ENCODE measurements at regions of chr4 and their contacts with region 1.

Region 1: DNA sequence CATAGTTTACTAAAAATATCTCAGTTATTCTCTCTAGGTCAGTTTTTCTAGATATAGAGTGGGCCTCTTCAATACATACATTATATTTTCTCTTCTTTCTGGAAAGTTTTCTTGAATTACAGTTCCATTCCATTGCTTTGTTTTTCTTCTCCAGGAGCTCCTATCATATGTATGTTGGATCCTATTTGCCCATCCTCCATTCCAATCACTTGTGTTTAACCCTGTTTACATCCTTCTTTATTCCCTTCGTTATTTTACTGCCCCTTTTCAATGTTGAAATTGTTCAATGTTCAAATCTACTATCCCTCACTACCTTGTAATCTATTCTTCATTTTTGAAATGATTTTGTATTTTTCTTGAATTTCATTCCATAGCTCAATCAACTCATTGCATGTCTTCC is 97.4 kb downstream of the IRF2 start:
- DNase-seq: no peak
- H3K4me3 ChIP-seq: no peak overlapping the region
- H3K27ac ChIP-seq: no peak overlapping the region
- H3K4me1 ChIP-seq: peaks cover 0 to 17% (median 7%) of the 10 kb centered on the region in 4 donors
- H3K27me3 ChIP-seq: no peaks in the 10 kb centered on the region
- CTCF ChIP-seq: no peak
- EP300 ChIP-seq: no peak
- POLR2A ChIP-seq: no peak

Region 2: DNA sequence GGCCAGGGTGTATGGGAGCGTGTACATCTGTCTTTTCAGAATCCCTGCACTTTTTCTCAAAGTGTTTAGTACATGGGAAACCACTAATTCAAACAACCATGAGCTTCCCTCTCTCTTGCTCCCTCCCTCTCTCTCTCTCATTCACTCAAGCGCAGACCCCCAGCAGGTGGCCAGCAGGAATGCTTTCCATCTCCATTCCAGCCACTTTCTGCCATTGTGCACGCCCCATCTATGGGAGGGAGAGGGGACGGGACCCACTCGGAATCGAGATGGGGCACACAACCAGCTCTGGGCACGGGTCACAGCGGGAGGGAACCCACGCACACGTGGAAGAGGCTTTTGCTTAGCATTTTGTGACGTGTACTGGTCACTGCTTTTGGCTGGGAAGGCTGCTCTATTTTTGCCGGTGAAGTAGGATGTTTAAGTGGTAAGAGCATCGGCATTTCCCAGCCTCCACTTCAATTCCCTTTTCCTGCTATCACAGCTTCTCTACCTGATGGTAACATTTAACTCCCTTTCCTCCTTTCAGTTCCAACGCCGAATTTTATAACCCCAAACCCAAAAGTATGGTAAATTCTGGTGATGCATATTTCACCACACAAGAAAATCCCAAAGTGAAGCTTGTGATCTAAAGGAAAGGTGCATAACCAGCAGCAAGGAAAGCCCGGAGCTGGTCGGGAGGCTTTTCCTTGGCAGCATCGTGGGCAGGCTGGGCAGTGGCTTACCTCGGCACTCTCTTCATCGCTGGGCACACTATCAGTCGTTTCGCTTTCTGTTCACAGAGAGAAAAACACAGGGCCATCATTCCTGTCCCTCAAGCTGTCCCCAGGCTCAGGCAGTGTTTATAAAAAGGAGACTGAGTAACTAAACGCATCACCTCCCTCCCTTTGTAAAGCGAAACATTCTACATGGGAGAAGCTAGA is 13.3 kb after region 1 on chr4:
- in situ Hi-C with region 1: no loop called
- intact Hi-C with region 1: loop called (anchors 1 kb)
- DNase-seq: no peak
- H3K4me3 ChIP-seq: no peak overlapping the region
- H3K27ac ChIP-seq: peak overlapping the region in 1 of 4 donors; percentile 3
- H3K4me1 ChIP-seq: peaks cover 9 to 27% (median 16%) of the 10 kb centered on the region in 4 donors
- H3K27me3 ChIP-seq: no peaks in the 10 kb centered on the region
- CTCF ChIP-seq: no peak
- EP300 ChIP-seq: no peak
- POLR2A ChIP-seq: no peak

Region 3: GRCh38 chr4:185203486-185204237 is 826.7 kb after region 1 on chr4 and contains the start of gene CFAP97:
- in situ Hi-C with region 1: no loop called
- intact Hi-C with region 1: no loop called
- DNase-seq: peak; percentile 92
- H3K4me3 ChIP-seq: peak within 1 kb of the TSS; percentile 65 to 80 (median 75)
- H3K27ac ChIP-seq: peak within 1 kb of the TSS; percentile 93 to 97 (median 96)
- H3K4me1 ChIP-seq: peaks cover 13 to 24% (median 22%) of the 10 kb centered on the region in 4 donors
- H3K27me3 ChIP-seq: no peaks in the 10 kb centered on the region
- CTCF ChIP-seq: no peak
- EP300 ChIP-seq: no peak
- POLR2A ChIP-seq: no peak
- total RNA-seq, gene CFAP97: 4.6 to 17.1 (median 9.3) TPM